ENCODE measurements at regions of chr4 and their contacts with region 1.

Region 1: DNA sequence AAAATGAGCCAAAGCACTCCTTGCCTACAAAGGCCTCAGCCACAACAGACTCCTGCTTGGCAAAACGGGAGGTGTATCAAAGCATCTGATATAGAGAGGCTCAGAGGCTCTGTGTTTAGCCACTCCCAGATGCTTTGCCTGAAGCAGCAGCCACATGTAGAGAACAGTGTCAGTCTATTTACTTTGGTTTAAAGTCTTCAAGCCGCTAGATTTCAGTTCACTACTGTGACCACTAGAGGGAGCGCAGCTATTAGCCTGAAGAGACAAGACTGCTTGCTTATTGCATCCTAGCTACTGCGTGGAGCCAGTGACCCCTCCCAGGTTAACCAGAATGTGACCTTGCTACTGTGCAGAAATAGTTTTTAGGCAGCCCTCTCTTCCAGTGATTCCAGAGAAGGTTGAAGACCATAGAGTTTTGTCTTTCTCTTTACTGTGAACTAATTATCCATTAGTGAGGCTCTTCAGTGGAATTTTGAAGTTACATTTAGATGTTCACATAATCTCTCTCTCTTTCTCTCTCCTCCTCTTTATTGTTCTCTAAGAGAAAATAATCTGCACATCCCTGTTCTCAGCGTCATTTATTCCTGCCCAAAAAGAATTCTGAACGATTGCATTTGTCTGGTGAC is 39.3 kb downstream of the BMP3 start:
- DNase-seq: peak; percentile 73
- H3K4me3 ChIP-seq: no peak overlapping the region
- H3K27ac ChIP-seq: no peak overlapping the region
- H3K4me1 ChIP-seq: no peaks in the 10 kb centered on the region
- H3K27me3 ChIP-seq: no peaks in the 10 kb centered on the region
- CTCF ChIP-seq: peak; percentile 90

Region 2: GRCh38 chr4:81351654-81352445 is 282.0 kb after region 1 on chr4:
- intact Hi-C with region 1: loop called (anchors 5 kb)
- DNase-seq: peak; percentile 81
- H3K4me3 ChIP-seq: no peak overlapping the region
- H3K27ac ChIP-seq: no peak overlapping the region
- H3K4me1 ChIP-seq: no peaks in the 10 kb centered on the region
- H3K27me3 ChIP-seq: no peaks in the 10 kb centered on the region
- CTCF ChIP-seq: peak; percentile 92